Mammary epithelial cell (primary cell): ENCODE measurements at regions of chr19 and their contacts with region 1.

Region 1: GRCh38 chr19:56252699-56253422 is 19.7 kb upstream of the EDDM13 start:
- DNase-seq: peak; percentile 65
- H3K4me3 ChIP-seq: no peak overlapping the region
- H3K27ac ChIP-seq: no peak overlapping the region
- H3K4me1 ChIP-seq: no peaks in the 10 kb centered on the region
- H3K27me3 ChIP-seq: no peaks in the 10 kb centered on the region
- CTCF ChIP-seq: peak; percentile 96 to 97

Region 2: DNA sequence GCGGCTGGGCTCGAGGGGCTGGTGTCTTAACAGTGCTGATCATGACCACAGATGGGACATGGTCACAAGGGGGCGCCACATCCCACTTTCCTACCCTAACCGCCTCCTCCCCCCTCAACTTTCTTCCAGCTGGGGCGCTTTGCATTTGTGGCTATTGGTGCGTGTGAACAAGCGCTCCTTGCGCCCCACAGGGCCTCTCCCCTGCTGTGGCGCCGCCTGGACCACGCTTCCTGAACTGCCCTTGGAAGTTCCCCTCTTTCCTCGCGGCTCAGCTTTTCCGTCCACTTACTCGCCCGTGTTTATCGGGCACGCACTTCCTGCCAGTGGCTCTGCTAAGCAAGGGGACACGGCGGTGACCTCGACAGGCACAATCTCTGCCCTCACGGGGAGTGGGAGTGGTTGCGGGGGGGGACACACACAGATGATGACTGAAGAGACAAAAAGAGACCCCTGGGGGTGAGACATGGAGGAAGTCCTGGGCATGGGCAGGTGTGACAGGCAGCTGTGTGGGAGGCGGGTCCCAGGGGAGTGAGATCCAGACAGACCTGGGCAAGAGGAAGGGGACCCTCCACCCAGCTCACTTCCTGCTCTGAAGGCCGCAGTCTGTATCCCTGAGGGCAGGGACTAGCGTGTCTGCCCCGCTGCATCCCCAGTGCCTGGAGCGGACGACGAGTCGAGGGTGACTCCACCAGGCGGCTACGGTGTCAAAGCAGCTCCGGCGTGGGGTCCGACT is 172.0 kb before region 1 on chr19:
- CTCF ChIA-PET with region 1: interaction called, 9 read pairs
- dilution Hi-C with region 1: no loop called
- in situ Hi-C with region 1: loop called in 1 of 2 experiments (anchors 10 kb)
- intact Hi-C with region 1: loop called (anchors 1 kb)
- DNase-seq: peak; percentile 57
- H3K4me3 ChIP-seq: peak overlapping the region in 2 of 3 experiments; percentile 32 to 49
- H3K27ac ChIP-seq: no peak overlapping the region
- H3K4me1 ChIP-seq: peaks cover 23% of the 10 kb centered on the region
- H3K27me3 ChIP-seq: no peaks in the 10 kb centered on the region
- CTCF ChIP-seq: peak; percentile 50 to 65

Region 3: GRCh38 chr19:56105090-56105701 is 147.7 kb before region 1 on chr19:
- CTCF ChIA-PET with region 1: no interaction called
- dilution Hi-C with region 1: no loop called
- in situ Hi-C with region 1: no loop called
- intact Hi-C with region 1: loop called (anchors 1 kb)
- DNase-seq: peak; percentile 71
- H3K4me3 ChIP-seq: no peak overlapping the region
- H3K27ac ChIP-seq: peak overlapping the region; percentile 27
- H3K4me1 ChIP-seq: peaks cover 31% of the 10 kb centered on the region
- H3K27me3 ChIP-seq: no peaks in the 10 kb centered on the region
- CTCF ChIP-seq: peak; percentile 70 to 90

Region 4: GRCh38 chr19:56155124-56155687 is 97.7 kb before region 1 on chr19:
- CTCF ChIA-PET with region 1: interaction called, 3 read pairs
- dilution Hi-C with region 1: no loop called
- in situ Hi-C with region 1: no loop called
- intact Hi-C with region 1: loop called (anchors 5 kb)
- DNase-seq: no peak
- H3K4me3 ChIP-seq: no peak overlapping the region
- H3K27ac ChIP-seq: no peak overlapping the region
- H3K4me1 ChIP-seq: no peaks in the 10 kb centered on the region
- H3K27me3 ChIP-seq: no peaks in the 10 kb centered on the region
- CTCF ChIP-seq: peak; percentile 18 to 37

Region 5: GRCh38 chr19:56217039-56217949 is 35.6 kb before region 1 on chr19:
- CTCF ChIA-PET with region 1: interaction called, 23 read pairs
- dilution Hi-C with region 1: no loop called
- in situ Hi-C with region 1: no loop called
- intact Hi-C with region 1: no loop called
- DNase-seq: peak; percentile 78
- H3K4me3 ChIP-seq: peak overlapping the region; percentile 42 to 53 (median 46)
- H3K27ac ChIP-seq: no peak overlapping the region
- H3K4me1 ChIP-seq: peaks cover 11% of the 10 kb centered on the region
- H3K27me3 ChIP-seq: no peaks in the 10 kb centered on the region
- CTCF ChIP-seq: no peak

Region 6: DNA sequence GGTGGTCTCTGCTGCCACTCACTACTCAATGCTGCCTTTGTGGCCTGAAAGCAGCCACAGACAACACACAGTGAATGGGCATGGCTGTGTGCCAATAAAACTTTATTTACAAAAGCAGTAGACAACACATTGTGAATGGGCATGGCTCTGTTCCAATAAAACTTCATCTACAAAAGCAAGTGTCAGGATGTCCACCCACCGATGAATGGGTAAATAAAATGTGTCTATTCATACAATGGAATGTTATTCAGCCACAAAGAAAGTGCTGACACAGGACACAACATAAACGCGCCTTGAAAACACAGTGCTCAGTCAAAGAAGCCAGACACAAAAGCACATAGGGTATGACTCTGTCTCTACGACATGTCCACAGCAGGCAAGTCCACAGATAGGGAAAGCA is 41.7 kb after region 1 on chr19:
- CTCF ChIA-PET with region 1: no interaction called
- dilution Hi-C with region 1: no loop called
- in situ Hi-C with region 1: no loop called
- intact Hi-C with region 1: no loop called
- DNase-seq: peak; percentile 94
- H3K4me3 ChIP-seq: peak overlapping the region in 1 of 3 experiments; percentile 21
- H3K27ac ChIP-seq: peak overlapping the region; percentile 82
- H3K4me1 ChIP-seq: peaks cover 29% of the 10 kb centered on the region
- H3K27me3 ChIP-seq: no peaks in the 10 kb centered on the region
- CTCF ChIP-seq: no peak

Region 7: GRCh38 chr19:56314562-56315077 is 61.8 kb after region 1 on chr19 and contains the start of gene ZSCAN5A:
- CTCF ChIA-PET with region 1: interaction called, 54 read pairs
- dilution Hi-C with region 1: no loop called
- in situ Hi-C with region 1: loop called in 1 of 2 experiments (anchors 10 kb)
- intact Hi-C with region 1: loop called (anchors 1 kb)
- DNase-seq: peak; percentile 95
- H3K4me3 ChIP-seq: peak within 1 kb of the TSS; percentile 66 to 91 (median 80)
- H3K27ac ChIP-seq: peak within 1 kb of the TSS; percentile 95
- H3K4me1 ChIP-seq: peaks cover 6% of the 10 kb centered on the region
- H3K27me3 ChIP-seq: no peaks in the 10 kb centered on the region
- CTCF ChIP-seq: no peak
- total RNA-seq, gene ZSCAN5A: 5.5 to 7.4 TPM

Region 8: GRCh38 chr19:56333505-56333904 is 80.6 kb after region 1 on chr19:
- CTCF ChIA-PET with region 1: interaction called, 141 read pairs
- dilution Hi-C with region 1: no loop called
- in situ Hi-C with region 1: loop called in 1 of 2 experiments (anchors 5 kb)
- intact Hi-C with region 1: loop called (anchors 1 kb)
- DNase-seq: peak; percentile 40
- H3K4me3 ChIP-seq: no peak overlapping the region
- H3K27ac ChIP-seq: no peak overlapping the region
- H3K4me1 ChIP-seq: no peaks in the 10 kb centered on the region
- H3K27me3 ChIP-seq: no peaks in the 10 kb centered on the region
- CTCF ChIP-seq: peak; percentile 83 to 88